ENCODE measurements at regions of chr14 and their contacts with region 1.

Region 1: DNA sequence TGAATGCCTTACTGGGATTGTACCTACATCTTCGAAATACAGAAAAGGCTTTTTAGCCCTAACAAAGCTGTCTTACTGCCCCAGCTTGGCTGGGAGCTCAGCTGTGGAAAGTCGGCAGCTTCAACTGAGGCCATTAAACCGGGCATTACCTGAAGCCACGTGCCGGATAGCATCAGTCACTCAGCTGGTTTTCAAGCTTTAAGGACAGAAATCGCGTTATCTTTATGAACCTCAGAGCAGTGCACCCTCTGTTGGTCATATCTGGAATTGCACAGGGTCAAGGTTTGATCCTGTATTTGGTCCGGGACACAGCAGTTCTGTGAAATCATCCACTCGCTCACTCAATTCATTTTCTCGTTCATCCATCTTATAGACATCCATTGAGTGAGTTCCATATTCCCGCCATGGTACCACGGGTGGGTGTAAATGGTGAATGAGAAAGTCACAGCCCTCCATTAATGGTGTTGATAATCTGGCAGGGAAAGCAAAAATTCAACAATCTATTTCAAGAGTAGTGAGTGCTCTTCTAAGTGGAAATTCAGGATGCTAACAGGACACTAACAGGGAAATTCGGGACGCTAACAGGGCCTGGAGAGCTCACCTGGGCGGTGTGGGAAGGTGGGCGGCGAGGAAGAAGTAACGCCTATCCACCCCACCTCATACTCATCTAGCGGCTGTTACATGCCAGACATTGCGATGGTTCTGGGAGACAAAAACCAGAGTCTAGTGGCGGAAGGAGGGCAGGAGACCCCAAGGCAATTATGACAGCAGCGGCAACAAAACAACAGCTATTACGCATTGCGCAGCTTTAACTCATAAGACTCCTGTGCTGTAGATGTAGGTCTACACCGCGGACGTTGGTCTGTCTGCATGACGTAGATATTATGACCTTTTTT is 60.6 kb upstream of the TCL1A start:
- DNase-seq: peak; percentile 63
- ATAC-seq: no peak
- H3K4me3 Mint-ChIP-seq: no peak overlapping the region
- H3K27ac Mint-ChIP-seq: no peak overlapping the region
- H3K4me1 Mint-ChIP-seq: no peaks in the 10 kb centered on the region
- H3K27me3 Mint-ChIP-seq: peaks cover 3% of the 10 kb centered on the region

Region 2: DNA sequence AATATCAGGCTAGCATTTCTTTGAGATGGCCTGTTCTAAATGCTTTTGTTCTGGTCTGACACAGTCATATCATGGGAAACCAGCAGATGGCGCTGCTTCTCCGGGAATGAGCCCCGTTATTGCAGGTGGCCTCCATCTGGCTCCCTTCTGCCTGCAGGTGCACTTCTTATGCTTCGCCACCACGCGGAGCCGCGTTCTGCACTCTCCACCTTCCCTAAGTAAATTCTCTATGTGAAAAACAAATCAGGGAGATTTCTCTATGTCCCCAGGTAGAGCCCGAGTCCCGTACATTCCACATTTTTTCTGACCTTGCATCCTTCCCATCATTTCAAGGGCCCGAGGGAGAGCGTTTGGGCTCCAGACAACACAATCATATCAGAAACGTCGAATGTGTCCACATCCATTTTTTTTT is 213.5 kb before region 1 on chr14:
- CTCF ChIA-PET with region 1: interaction called, 17 read pairs
- DNase-seq: peak; percentile 89
- ATAC-seq: peak; percentile 98
- H3K4me3 Mint-ChIP-seq: no peak overlapping the region
- H3K27ac Mint-ChIP-seq: no peak overlapping the region
- H3K4me1 Mint-ChIP-seq: peaks cover 3% of the 10 kb centered on the region
- H3K27me3 Mint-ChIP-seq: peaks cover 7% of the 10 kb centered on the region

Region 3: DNA sequence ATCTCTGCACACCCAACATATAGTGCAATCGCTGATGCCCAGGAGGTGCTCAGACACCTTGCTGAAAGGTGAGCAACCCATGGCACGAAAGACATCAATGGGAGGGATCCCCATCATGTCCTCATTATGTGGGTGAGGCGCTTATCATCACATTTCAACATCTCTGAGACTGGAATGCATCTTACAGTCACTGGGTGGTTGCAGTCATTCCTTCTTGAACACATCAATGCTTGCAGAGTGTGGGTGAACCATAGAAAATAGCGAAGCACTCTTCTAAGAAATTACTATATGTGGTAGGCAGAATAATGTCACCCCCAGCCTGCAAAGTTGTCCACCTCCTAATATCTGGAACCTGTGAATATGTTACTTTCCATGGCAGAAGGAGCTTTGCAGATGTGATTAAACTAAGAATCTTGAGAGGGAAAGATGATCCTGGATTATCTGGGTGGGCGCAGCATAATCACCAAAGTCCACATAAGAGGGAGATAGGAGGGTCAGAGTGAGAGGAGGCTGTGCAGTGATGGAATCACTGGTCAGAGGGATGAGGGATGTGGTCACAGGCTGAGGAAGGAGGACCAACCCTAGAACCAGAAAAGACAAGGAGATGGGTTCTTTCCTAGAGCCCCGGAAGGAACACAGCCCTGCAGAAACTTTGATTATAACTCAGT is 188.4 kb before region 1 on chr14:
- CTCF ChIA-PET with region 1: no interaction called
- DNase-seq: no peak
- ATAC-seq: no peak
- H3K4me3 Mint-ChIP-seq: no peak overlapping the region
- H3K27ac Mint-ChIP-seq: no peak overlapping the region
- H3K4me1 Mint-ChIP-seq: no peaks in the 10 kb centered on the region
- H3K27me3 Mint-ChIP-seq: peaks cover 5% of the 10 kb centered on the region

Region 4: GRCh38 chr14:95759941-95760340 is 14.6 kb before region 1 on chr14:
- CTCF ChIA-PET with region 1: interaction called, 13 read pairs
- DNase-seq: no peak
- ATAC-seq: no peak
- H3K4me3 Mint-ChIP-seq: no peak overlapping the region
- H3K27ac Mint-ChIP-seq: no peak overlapping the region
- H3K4me1 Mint-ChIP-seq: no peaks in the 10 kb centered on the region
- H3K27me3 Mint-ChIP-seq: peaks cover 7% of the 10 kb centered on the region